T-cell (primary cell): ENCODE measurements at regions of chr15 and their contacts with region 1.

Region 1: DNA sequence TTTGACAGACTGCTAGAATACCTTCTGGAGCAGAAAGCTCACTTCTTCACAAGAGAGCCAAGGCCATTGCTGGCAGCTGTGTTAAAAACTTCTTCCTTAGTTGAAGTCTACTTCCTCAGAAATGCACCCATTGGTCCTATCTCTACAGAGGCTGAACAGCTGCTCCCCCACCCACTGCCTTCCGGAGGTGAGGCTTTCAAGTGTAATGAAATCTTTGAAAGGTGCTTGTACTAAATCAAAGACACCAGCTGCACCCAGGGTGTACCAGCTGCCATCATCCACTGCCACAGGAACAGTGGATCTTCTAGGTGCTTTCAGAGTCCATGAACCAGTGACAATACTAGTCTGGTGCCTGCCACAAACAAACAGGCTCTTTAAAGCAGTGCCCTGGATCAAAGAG is 26.4 kb upstream of the HERC1 start:
- DNase-seq: peak; percentile 51 to 89 (median 72)
- ATAC-seq: peak; percentile 92 to 98 (median 98)
- H3K4me3 ChIP-seq: peak overlapping the region in 1 of 2 donors; percentile 35
- H3K4me3 Mint-ChIP-seq: peak overlapping the region; percentile 22 to 66 (median 46)
- H3K27ac ChIP-seq: peak overlapping the region; percentile 88
- H3K27ac Mint-ChIP-seq: peak overlapping the region; percentile 97
- H3K4me1 ChIP-seq: peaks cover 30 to 36% of the 10 kb centered on the region in 2 experiments
- H3K4me1 Mint-ChIP-seq: peaks cover 55 to 70% (median 68%) of the 10 kb centered on the region in 3 donors
- H3K27me3 ChIP-seq: no peaks in the 10 kb centered on the region
- H3K27me3 Mint-ChIP-seq: no peaks in the 10 kb centered on the region

Region 2: GRCh38 chr15:63836579-63836978 is 23.6 kb before region 1 on chr15:
- CTCF ChIA-PET with region 1: interaction called in 1 of 2 experiments, 5 read pairs
- POLR2A ChIA-PET with region 1: interaction called, 4 to 18 read pairs
- DNase-seq: no peak
- ATAC-seq: no peak
- H3K4me3 ChIP-seq: no peak overlapping the region
- H3K4me3 Mint-ChIP-seq: peak overlapping the region in 1 of 3 donors; percentile 49
- H3K27ac ChIP-seq: no peak overlapping the region
- H3K27ac Mint-ChIP-seq: no peak overlapping the region
- H3K4me1 ChIP-seq: peaks cover 12 to 17% of the 10 kb centered on the region in 2 experiments
- H3K4me1 Mint-ChIP-seq: peaks cover 32 to 38% (median 33%) of the 10 kb centered on the region in 3 donors
- H3K27me3 ChIP-seq: no peaks in the 10 kb centered on the region
- H3K27me3 Mint-ChIP-seq: no peaks in the 10 kb centered on the region

Region 3: DNA sequence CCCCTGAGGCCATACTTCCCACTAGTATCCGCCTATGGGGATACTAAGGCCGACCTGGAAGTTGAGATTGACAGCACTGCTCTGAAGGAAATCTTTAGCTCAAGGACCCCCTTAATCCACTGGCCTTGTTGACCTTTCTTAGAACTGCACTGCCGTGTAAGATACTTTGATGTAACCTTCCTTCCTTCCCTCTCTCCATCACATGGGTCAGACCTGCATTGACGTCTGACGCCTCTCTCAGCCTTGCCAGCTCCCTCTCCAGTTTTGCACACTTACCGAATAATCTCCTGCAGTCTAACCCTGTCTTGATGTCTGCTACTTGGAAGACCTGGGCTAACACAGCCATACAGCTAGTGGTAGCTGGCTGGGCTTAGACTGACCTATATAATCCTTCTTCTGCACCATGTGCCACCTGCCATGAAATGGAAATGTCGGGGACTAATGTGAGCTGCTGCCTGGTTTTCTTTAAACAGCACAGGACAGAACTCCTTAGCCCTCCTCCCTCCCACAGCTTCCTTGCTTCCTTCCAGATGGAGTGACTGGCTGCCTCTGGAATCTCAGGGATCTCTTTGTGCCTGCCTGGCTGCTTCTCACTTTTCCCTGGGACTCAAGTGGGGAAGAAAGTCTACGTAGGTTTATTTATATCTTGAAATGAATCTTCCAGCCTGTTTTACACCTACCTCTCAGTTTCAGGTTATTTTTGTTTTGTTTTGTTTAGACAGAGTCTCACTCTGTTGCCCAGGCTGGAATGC is 12.8 kb after region 1 on chr15:
- CTCF ChIA-PET with region 1: no interaction called
- POLR2A ChIA-PET with region 1: no interaction called
- DNase-seq: no peak
- ATAC-seq: no peak
- H3K4me3 ChIP-seq: no peak overlapping the region
- H3K4me3 Mint-ChIP-seq: no peak overlapping the region
- H3K27ac ChIP-seq: no peak overlapping the region
- H3K27ac Mint-ChIP-seq: no peak overlapping the region
- H3K4me1 ChIP-seq: peaks cover 0 to 6% of the 10 kb centered on the region in 2 experiments
- H3K4me1 Mint-ChIP-seq: peaks cover 8 to 14% (median 10%) of the 10 kb centered on the region in 3 donors
- H3K27me3 ChIP-seq: no peaks in the 10 kb centered on the region
- H3K27me3 Mint-ChIP-seq: no peaks in the 10 kb centered on the region